Common myeloid progenitor, CD34-positive (primary cell): ENCODE measurements at regions of chr16 and their contacts with region 1.

Region 1: DNA sequence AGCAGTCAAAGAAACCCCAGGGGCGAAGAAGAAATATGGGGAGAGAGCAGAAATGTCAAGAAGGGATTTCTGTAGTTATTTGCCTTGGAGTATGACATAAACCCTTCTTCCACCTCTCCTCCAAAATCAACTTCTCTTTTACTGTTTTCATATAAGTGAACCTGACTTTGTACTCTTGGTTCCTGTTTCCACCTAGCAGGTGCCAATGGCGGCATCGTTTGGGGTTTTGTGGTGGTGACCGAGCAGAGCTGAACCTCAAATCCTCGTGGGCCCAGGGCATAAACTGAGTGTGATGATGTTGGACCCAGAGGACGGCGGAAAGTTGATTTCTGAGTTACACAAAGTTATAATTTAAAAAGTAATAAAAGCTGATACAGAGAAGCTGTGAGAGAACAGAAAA is 39.6 kb upstream of the PSMD7 start:
- DNase-seq: peak; percentile 19 to 69 (median 59)
- H3K4me3 ChIP-seq: no peak overlapping the region
- H3K27ac ChIP-seq: no peak overlapping the region
- H3K4me1 ChIP-seq: peaks cover 0 to 8% (median 2%) of the 10 kb centered on the region in 4 experiments
- H3K27me3 ChIP-seq: no peaks in the 10 kb centered on the region

Region 2: DNA sequence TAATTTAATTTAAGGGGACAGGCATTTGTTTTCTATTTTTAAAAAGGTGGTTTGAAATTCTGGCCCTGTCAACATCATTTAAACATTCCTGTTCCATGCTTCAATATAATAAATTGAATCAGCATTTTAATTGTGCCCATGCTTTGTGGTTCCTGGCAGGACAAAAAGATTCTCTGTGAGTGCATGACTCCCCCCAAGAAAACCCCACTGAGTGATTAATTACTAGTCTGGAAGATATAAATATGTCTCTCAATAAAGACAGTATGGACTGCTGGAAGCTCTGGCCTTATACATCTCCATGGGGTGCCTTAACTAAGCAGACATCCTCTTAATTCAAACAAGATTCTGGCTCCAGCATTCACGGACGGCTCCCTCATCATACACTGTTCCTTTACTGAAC is 55.5 kb before region 1 on chr16:
- CTCF ChIA-PET with region 1: no interaction called
- POLR2A ChIA-PET with region 1: no interaction called
- DNase-seq: no peak
- H3K4me3 ChIP-seq: no peak overlapping the region
- H3K27ac ChIP-seq: no peak overlapping the region
- H3K4me1 ChIP-seq: no peaks in the 10 kb centered on the region
- H3K27me3 ChIP-seq: peaks cover 0 to 4% (median 0%) of the 10 kb centered on the region in 5 experiments

Region 3: GRCh38 chr16:74275002-74275636 is 18.1 kb after region 1 on chr16:
- CTCF ChIA-PET with region 1: interaction called, 10 read pairs
- POLR2A ChIA-PET with region 1: no interaction called
- DNase-seq: peak; percentile 34 to 52 (median 51)
- H3K4me3 ChIP-seq: no peak overlapping the region
- H3K27ac ChIP-seq: no peak overlapping the region
- H3K4me1 ChIP-seq: peaks cover 0 to under 1% (median 0%) of the 10 kb centered on the region in 4 experiments
- H3K27me3 ChIP-seq: peaks cover 0 to 1% (median 0%) of the 10 kb centered on the region in 5 experiments

Region 4: DNA sequence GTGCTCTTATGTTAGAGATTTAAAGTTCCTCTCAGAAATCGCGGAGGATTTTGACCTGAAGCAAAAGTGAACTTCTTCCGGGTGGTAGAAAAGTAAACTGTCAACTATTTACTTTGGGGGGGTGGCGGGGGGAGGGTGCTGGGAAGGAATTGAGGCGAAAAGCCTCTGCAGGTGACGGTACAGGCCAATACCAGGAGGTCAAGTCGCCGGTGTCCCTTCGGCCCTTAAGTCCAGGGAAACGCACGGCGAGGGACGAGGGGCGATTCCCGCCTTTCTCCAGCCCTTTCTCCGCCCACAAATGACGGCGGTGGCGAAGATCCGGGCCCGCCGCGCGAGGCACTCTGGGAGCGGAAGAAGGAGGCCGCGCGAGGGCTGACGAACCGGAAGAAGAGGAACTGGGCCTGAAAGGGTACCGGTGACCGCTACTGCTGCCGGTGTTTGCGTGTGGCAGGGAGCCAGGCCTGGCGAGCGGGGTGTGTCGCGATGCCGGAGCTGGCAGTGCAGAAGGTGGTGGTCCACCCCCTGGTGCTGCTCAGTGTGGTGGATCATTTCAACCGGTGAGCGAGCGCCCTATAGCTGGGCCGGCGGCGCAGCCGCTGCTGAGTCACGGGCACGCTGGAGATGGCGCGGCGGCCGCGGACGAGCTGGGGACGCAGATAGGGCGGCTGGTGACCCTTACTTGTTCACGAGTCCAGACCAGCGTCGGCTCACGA is 39.5 kb after region 1 on chr16 and contains the start of gene PSMD7:
- CTCF ChIA-PET with region 1: no interaction called
- POLR2A ChIA-PET with region 1: no interaction called
- DNase-seq: peak; percentile 91 to 97 (median 95)
- H3K4me3 ChIP-seq: peak within 1 kb of the TSS; percentile 72 to 93 (median 89)
- H3K27ac ChIP-seq: peak within 1 kb of the TSS; percentile 87 to 96
- H3K4me1 ChIP-seq: peaks cover 7 to 29% (median 21%) of the 10 kb centered on the region in 4 experiments
- H3K27me3 ChIP-seq: no peaks in the 10 kb centered on the region

Region 5: DNA sequence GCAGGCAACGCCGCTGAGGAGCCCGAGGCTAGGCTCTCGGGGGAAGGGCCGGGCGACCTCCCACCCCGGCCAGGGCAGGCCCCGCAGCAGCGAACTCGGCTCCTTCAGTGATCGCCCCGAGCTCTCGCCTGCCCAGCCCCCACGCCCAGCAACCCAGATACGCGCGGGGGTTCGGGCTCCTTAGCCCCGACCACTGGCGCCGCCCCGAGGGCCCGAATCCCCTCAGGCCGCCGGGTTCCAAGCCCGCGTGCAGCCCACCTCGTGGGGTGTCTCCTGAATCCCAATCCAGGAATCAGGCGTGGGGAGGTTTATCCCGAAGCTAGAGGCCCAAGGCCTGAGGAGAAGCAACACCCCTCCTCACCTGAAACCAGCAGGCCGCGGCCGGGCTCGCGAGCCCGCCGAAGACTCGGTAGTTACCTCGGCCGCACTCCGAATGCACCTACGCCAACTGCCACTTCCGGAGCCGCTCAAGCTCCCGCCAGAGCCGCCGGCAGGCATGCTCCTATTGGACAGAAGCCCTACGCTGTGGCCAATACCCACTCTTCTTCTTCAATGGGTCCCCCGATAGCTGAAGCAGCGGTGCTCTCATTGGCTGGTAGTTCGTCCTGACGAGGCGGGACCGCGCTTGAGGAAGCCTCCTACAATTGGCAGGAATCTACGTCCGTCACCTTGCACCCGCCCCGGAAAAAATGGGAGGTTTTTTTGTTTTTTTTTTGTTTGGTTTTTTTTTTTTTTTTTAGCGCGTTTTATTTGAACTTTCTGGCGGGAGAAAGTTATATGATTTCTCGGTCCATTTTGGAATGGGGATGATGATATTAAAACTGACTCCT is 409.6 kb after region 1 on chr16 and contains the start of gene RFWD3:
- CTCF ChIA-PET with region 1: no interaction called
- POLR2A ChIA-PET with region 1: no interaction called
- DNase-seq: peak; percentile 99 to 100 (median 100)
- H3K4me3 ChIP-seq: peak within 1 kb of the TSS; percentile 91 to 97 (median 92)
- H3K27ac ChIP-seq: peak within 1 kb of the TSS; percentile 93 to 97
- H3K4me1 ChIP-seq: peaks cover 8 to 20% (median 13%) of the 10 kb centered on the region in 4 experiments
- H3K27me3 ChIP-seq: no peaks in the 10 kb centered on the region